Vagina (tissue), 2 donors: ENCODE measurements at regions of chr3 and their contacts with region 1.

Region 1: GRCh38 chr3:129934234-129935123 is 40.0 kb upstream of the TRH start:
- DNase-seq: no peak
- H3K4me3 ChIP-seq: no peak overlapping the region
- H3K27ac ChIP-seq: no peak overlapping the region
- H3K4me1 ChIP-seq: no peaks in the 10 kb centered on the region
- H3K27me3 ChIP-seq: no peaks in the 10 kb centered on the region
- CTCF ChIP-seq: peak; percentile 80 to 96 (median 94)
- POLR2A ChIP-seq: no peak

Region 2: DNA sequence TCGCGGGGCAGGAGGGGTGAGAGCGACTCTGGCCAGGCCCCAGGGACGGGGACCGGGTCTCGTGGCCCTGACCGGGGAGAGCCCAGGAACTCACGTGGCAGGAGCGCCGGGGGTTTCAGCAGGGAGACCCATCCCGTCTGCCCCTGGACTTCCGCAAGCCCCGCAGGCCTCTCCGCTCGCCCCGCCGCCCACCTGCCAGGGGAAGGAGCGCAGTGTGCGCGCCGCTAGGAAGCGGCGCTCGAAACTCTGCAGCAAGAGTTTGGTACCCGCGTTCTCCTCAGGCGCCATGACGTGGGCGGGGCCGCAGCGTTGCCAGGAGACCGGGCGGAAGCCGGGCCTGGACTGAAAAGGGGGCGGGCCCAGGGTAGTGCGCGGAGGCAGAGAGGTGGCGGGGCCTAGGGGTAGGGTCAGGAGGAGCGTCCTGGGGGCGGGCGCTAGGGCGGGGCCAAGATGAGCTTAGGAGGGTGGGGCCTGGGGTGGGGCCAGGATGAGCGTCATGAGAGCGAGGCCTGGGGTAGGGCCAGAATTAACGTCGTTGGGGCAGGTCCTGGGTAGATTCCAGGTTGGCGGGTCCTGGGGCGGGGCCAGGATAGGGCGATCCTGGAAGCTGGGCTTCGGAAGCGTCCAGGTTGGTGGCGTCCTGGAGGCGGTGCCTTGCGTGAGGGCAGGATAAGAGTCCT is 176.8 kb after region 1 on chr3:
- intact Hi-C with region 1: loop called (anchors 10 kb)
- DNase-seq: peak; percentile 99 to 100
- H3K4me3 ChIP-seq: peak overlapping the region; percentile 52 to 88
- H3K27ac ChIP-seq: peak overlapping the region; percentile 80
- H3K4me1 ChIP-seq: peaks cover 18% of the 10 kb centered on the region
- H3K27me3 ChIP-seq: no peaks in the 10 kb centered on the region
- CTCF ChIP-seq: no peak
- POLR2A ChIP-seq: peak in 1 of 2 donors; percentile 54